IMR-90 (cell line): ENCODE measurements at regions of chr11 and their contacts with region 1.

Region 1: GRCh38 chr11:10792398-10792975 is 16.2 kb downstream of the EIF4G2 start:
- DNase-seq: peak; percentile 62
- ATAC-seq: peak; percentile 94
- H3K4me3 ChIP-seq: no peak overlapping the region
- H3K27ac ChIP-seq: no peak overlapping the region
- H3K4me1 ChIP-seq: no peaks in the 10 kb centered on the region
- H3K27me3 ChIP-seq: no peaks in the 10 kb centered on the region
- CTCF ChIP-seq: peak; percentile 93
- POLR2A ChIP-seq: no peak
- RAD21 ChIP-seq: peak; percentile 92

Region 2: GRCh38 chr11:11022125-11022730 is 229.7 kb after region 1 on chr11:
- CTCF ChIA-PET with region 1: interaction called, 13 read pairs
- POLR2A ChIA-PET with region 1: no interaction called
- dilution Hi-C with region 1: no loop called
- in situ Hi-C with region 1: loop called (anchors 5 kb)
- intact Hi-C with region 1: loop called (anchors 1 kb)
- DNase-seq: peak; percentile 24
- ATAC-seq: peak; percentile 55; the same call in 1 of the 2 replicates
- H3K4me3 ChIP-seq: no peak overlapping the region
- H3K27ac ChIP-seq: no peak overlapping the region
- H3K4me1 ChIP-seq: peaks cover 1% of the 10 kb centered on the region; the same call in 1 of the 2 replicates
- H3K27me3 ChIP-seq: peaks cover 19% of the 10 kb centered on the region
- CTCF ChIP-seq: peak; percentile 62
- POLR2A ChIP-seq: no peak
- RAD21 ChIP-seq: peak; percentile 48

Region 3: GRCh38 chr11:12269104-12269441 is 1476.6 kb after region 1 on chr11:
- CTCF ChIA-PET with region 1: no interaction called
- POLR2A ChIA-PET with region 1: no interaction called
- dilution Hi-C with region 1: no loop called
- in situ Hi-C with region 1: loop called (anchors 25 kb)
- intact Hi-C with region 1: no loop called
- DNase-seq: peak; percentile 68
- ATAC-seq: peak; percentile 71
- H3K4me3 ChIP-seq: no peak overlapping the region
- H3K27ac ChIP-seq: peak overlapping the region; percentile 54
- H3K4me1 ChIP-seq: peaks cover 22% of the 10 kb centered on the region
- H3K27me3 ChIP-seq: no peaks in the 10 kb centered on the region
- CTCF ChIP-seq: no peak
- POLR2A ChIP-seq: no peak
- RAD21 ChIP-seq: no peak